Endothelial cell of umbilical vein (primary cell): ENCODE measurements at regions of chr2 and their contacts with region 1.

Region 1: DNA sequence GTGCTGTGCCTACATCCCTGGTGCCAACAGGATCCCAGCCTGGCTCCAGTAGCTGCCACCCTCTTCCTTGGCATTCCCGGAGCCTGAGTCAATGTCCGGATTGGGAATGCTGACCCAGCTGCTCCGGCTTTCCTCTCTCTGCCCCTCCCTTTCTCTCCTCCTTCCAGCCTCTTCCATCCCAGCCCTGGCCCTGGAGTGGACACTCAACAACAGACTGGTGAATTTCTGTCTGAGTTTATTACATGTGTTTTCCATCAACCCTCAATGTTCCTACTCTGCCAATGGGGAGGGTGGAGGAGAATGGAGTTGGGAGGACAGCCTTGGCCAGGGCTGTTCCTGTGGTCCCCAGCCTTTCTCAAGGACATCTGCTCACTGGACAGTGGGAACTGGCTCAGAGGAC is 917 bp upstream of the PRKAG3 start:
- DNase-seq: peak; percentile 71
- H3K4me3 ChIP-seq: no peak overlapping the region
- H3K27ac ChIP-seq: peak overlapping the region; percentile 65
- H3K4me1 ChIP-seq: peaks cover 17% of the 10 kb centered on the region
- H3K27me3 ChIP-seq: peaks cover 0 to 2% of the 10 kb centered on the region in 2 experiments
- CTCF ChIP-seq: no peak
- POLR2A ChIP-seq: no peak

Region 2: DNA sequence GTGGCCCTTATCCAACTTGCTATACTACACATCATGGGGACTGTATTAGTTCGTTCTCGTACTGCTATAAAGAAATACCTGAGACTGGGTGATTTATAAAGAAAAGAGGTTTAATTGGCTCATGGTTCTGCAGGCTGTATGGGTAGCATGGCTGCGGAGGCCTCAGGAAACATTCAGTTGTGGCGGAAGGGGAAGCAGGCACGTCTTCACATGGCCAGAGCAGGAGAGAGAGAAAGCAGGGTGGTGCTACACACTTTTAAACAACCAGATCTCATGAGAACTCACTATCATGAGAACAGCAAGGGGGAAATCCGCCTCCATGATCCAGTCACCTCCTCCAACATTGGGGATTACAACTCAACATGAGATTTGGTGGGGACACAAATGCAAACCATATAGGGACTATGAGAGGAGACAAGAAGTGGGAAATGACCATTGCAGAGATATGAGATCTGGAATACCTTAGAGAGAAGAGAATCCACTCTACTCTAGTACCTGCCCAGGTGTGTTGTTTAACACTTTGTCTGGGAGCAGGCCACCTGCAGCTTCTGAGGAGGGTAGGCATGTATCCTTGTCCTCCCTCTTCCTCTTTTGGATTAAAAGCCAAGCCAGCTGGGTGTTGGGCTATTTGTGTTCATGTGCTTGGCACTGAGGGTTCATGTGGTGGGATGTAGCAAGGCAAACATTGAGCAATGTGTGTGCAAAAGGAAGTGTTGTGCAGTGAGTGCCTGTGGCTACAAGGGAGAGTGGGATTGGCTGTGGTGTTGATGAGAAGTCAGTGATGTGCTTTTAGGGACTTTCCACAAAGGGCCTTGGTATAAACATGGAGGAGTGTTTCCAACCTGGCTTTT is 99.1 kb before region 1 on chr2:
- CTCF ChIA-PET with region 1: no interaction called
- POLR2A ChIA-PET with region 1: no interaction called
- dilution Hi-C with region 1: no loop called
- intact Hi-C with region 1: loop called (anchors 1 kb)
- DNase-seq: no peak
- H3K4me3 ChIP-seq: no peak overlapping the region
- H3K27ac ChIP-seq: no peak overlapping the region
- H3K4me1 ChIP-seq: peaks cover 16% of the 10 kb centered on the region
- H3K27me3 ChIP-seq: no peaks in the 10 kb centered on the region
- CTCF ChIP-seq: no peak
- POLR2A ChIP-seq: no peak

Region 3: GRCh38 chr2:218781691-218782527 is 50.6 kb before region 1 on chr2 and contains the start of gene CYP27A1:
- CTCF ChIA-PET with region 1: no interaction called
- POLR2A ChIA-PET with region 1: no interaction called
- dilution Hi-C with region 1: no loop called
- intact Hi-C with region 1: loop called (anchors 2 kb)
- DNase-seq: peak; percentile 43
- H3K4me3 ChIP-seq: peak within 1 kb of the TSS; percentile 44 to 66 (median 53)
- H3K27ac ChIP-seq: no peak within 1 kb of the TSS
- H3K4me1 ChIP-seq: peaks cover 6% of the 10 kb centered on the region
- H3K27me3 ChIP-seq: no peaks in the 10 kb centered on the region
- CTCF ChIP-seq: no peak
- POLR2A ChIP-seq: no peak
- total RNA-seq, gene CYP27A1: 12.6 and 15.1 TPM in 2 replicates

Region 4: GRCh38 chr2:218908721-218909619 is 76.5 kb after region 1 on chr2:
- CTCF ChIA-PET with region 1: no interaction called
- POLR2A ChIA-PET with region 1: no interaction called
- dilution Hi-C with region 1: no loop called
- intact Hi-C with region 1: no loop called
- DNase-seq: peak; percentile 56
- H3K4me3 ChIP-seq: peak overlapping the region; percentile 13 to 47 (median 22)
- H3K27ac ChIP-seq: no peak overlapping the region
- H3K4me1 ChIP-seq: peaks cover 11% of the 10 kb centered on the region
- H3K27me3 ChIP-seq: peaks cover 11 to 12% of the 10 kb centered on the region in 2 experiments
- CTCF ChIP-seq: no peak
- POLR2A ChIP-seq: no peak